GM12878 (cell line): ENCODE measurements at regions of chr6 and their contacts with region 1.

Region 1: DNA sequence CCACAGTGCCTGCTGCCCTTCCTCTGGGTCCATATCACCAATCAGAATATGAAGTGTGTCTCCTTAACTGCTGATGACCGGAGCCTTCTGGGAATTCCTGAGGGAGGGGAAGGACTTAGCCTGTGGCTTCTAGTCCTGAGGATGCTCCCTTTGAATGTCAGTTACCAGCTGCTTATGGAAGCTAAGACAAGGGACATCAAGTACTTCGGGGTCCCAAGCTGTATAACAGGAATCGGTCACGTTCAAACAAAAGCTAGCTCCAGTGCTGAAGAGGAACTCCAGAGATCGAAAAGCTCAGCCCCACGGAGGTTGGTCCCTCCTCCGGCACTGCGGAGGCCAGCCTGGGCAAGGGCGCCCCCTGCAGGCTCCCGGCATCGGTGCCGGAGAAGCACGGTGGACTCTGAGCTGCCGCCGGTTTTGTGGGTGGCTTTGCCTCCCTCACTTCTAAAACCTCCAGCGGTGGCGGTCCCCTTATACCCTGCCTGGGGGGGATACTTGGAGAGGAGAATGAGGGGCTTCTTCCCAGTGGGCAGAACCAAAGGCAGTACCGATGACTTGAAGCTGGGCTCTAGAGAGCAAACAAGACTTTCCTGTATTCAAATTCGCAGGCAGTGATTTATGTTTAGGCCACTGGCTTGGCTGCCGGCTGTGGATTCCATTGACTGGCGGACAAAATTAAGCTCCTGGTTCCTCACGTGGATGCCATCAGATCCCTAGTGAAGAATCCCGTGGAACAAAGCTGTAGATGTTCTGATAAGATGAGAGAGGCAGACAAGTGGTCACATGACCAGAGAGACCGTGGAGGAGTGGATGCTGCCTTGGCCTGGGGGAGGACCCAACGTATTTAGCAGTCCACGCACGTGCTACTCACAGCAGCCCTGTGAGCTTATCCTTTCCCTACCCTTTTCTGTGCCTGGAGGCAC is 16.2 kb upstream of the UBR2 start:
- DNase-seq: no peak
- ATAC-seq: peak; percentile 100
- H3K4me3 ChIP-seq: peak overlapping the region; percentile 59
- H3K27ac ChIP-seq: no peak overlapping the region
- H3K4me1 ChIP-seq: peaks cover 10% of the 10 kb centered on the region
- H3K27me3 ChIP-seq: no peaks in the 10 kb centered on the region
- CTCF ChIP-seq: peak; percentile 99; a peak in 5 of 6 replicates
- EP300 ChIP-seq: no peak
- POLR2A ChIP-seq: no peak; the same call in 1 of the 2 replicates
- RAD21 ChIP-seq: peak; percentile 99

Region 2: DNA sequence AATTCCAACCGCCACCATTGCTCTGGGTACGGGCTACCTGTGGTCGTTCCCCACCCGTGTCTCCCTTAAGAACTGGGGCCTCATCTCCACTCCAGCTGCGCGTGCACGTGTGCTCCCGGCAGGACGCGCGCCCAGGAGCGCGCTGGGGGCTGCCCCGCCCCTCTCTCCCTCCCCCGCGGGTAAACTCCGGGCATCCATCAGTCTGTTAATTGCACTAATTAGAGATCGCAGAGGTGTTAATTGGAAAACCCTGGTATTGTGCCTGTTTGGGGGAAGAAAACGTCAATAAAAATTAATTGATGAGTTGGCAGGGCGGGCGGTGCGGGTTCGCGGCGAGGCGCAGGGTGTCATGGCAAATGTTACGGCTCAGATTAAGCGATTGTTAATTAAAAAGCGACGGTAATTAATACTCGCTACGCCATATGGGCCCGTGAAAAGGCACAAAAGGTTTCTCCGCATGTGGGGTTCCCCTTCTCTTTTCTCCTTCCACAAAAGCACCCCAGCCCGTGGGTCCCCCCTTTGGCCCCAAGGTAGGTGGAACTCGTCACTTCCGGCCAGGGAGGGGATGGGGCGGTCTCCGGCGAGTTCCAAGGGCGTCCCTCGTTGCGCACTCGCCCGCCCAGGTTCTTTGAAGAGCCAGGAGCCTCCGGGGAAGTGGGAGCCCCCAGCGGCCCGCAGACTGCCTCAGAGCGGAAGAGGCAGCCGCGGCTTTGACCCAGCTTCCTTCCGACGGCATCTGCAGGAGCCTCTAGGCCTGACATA is 987.1 kb before region 1 on chr6:
- CTCF ChIA-PET with region 1: no interaction called
- POLR2A ChIA-PET with region 1: no interaction called
- RAD21 ChIA-PET with region 1: no interaction called
- SMC1A ChIA-PET with region 1: no interaction called
- in situ Hi-C with region 1: no loop called
- intact Hi-C with region 1: no loop called
- DNase-seq: no peak
- ATAC-seq: peak; percentile 92
- H3K4me3 ChIP-seq: peak overlapping the region; percentile 53
- H3K27ac ChIP-seq: peak overlapping the region; percentile 42; the same call in 1 of the 2 replicates
- H3K4me1 ChIP-seq: peaks cover 5% of the 10 kb centered on the region; the same call in 1 of the 2 replicates
- H3K27me3 ChIP-seq: no peaks in the 10 kb centered on the region
- CTCF ChIP-seq: 0 out of 6 replicates have a peak, but pooled peaks of 1 of the 3 experiments have one; percentile 3
- EP300 ChIP-seq: no peak
- POLR2A ChIP-seq: peak; percentile 60
- RAD21 ChIP-seq: 0 out of 2 replicates have a peak, but pooled peaks have one; percentile 4

Region 3: DNA sequence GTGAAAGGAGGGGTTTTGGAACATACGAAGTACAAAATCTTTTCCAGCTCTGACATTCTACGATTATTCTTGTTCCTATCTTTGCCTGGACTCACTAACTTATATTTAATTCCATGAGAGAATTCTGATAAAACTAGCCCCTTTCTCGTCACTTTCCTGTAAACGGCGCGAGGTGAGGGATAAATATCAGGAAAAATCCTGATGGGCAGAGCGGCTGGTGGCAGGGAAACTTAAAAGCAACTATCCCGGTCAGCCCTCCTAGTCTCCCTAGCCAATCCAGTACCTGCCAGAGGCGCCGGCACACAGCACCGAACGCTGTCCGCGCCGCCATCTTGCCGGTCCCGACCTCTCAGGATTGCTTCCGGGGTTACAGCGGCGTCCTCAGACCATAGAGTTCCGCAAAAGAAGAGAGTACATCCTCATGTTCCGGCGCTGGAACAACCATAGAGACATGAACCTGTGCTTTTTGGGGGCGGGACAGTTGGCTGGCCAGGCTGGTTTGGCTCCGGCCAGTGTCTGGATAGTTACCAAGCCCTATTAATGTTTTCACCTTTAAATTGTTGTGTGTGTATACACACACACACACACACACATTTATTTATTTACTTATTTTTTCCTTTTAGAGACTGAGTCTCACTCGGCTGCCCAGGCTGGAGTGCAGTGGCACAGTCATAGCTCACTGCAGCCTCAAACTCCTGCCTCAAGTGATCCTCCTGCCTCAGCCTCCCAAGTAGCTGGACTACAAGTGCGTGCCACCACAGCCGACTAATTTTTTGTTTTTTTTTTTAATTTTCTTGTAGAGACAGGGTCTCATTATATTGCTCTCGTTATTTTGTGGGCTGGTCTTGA is 329.9 kb before region 1 on chr6 and contains the start of gene MRPS10:
- CTCF ChIA-PET with region 1: interaction called, 25 read pairs
- POLR2A ChIA-PET with region 1: interaction called, 3 read pairs
- RAD21 ChIA-PET with region 1: interaction called, 28 read pairs
- SMC1A ChIA-PET with region 1: interaction called, 11 read pairs
- in situ Hi-C with region 1: no loop called
- intact Hi-C with region 1: loop called (anchors 5 kb)
- DNase-seq: peak; percentile 74
- ATAC-seq: peak; percentile 98
- H3K4me3 ChIP-seq: peak within 1 kb of the TSS; percentile 85
- H3K27ac ChIP-seq: peak within 1 kb of the TSS; percentile 65
- H3K4me1 ChIP-seq: peaks cover 5% of the 10 kb centered on the region; the same call in 1 of the 2 replicates
- H3K27me3 ChIP-seq: no peaks in the 10 kb centered on the region
- CTCF ChIP-seq: no peak
- EP300 ChIP-seq: 0 out of 4 replicates have a peak, but pooled peaks of 1 of the 2 experiments have one; percentile 14
- POLR2A ChIP-seq: peak; percentile 97
- RAD21 ChIP-seq: no peak
- polyA plus RNA-seq, gene MRPS10: 70.4 to 83.3 TPM

Region 4: GRCh38 chr6:42300696-42301095 is 247.0 kb before region 1 on chr6:
- CTCF ChIA-PET with region 1: interaction called, 15 read pairs
- POLR2A ChIA-PET with region 1: interaction called, 3 read pairs
- RAD21 ChIA-PET with region 1: interaction called, 8 read pairs
- SMC1A ChIA-PET with region 1: interaction called, 14 read pairs
- in situ Hi-C with region 1: loop called (anchors 5 kb)
- intact Hi-C with region 1: no loop called
- DNase-seq: no peak
- ATAC-seq: no peak
- H3K4me3 ChIP-seq: no peak overlapping the region
- H3K27ac ChIP-seq: no peak overlapping the region
- H3K4me1 ChIP-seq: no peaks in the 10 kb centered on the region
- H3K27me3 ChIP-seq: no peaks in the 10 kb centered on the region
- CTCF ChIP-seq: no peak
- EP300 ChIP-seq: no peak
- POLR2A ChIP-seq: no peak
- RAD21 ChIP-seq: no peak

Region 5: DNA sequence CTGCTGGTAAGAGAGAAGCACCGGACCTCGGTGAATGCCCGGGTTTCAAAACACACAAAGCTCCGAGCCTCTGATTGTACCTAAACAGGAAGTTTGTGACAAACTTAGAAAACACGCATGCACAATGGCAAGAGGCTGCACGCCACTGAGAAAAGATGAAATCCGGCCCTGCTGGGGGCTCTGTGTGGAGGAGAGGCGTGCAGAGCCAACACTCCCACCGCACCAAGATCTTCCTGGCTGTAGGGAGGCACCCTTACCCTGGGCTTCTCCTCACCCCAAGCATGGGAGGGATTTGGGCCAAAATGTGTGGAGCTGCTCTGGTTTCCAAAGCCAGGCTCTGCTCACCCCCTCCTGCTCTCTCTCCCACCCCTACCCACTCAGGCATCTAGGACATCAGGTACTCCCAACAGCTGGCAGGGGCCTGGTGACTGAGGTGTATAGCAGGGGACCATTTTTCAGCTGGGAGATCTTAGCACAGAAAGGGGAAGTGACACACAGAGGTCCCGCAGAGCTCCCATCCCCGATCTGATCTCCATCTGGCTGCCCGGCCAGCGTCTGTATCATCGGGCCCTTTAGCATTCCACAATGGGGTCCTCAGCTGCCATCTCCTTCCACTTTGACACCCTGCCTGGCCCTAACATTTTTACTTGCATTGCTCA is 180.2 kb before region 1 on chr6:
- CTCF ChIA-PET with region 1: interaction called, 20 read pairs
- POLR2A ChIA-PET with region 1: interaction called, 3 read pairs
- RAD21 ChIA-PET with region 1: interaction called, 6 read pairs
- SMC1A ChIA-PET with region 1: interaction called, 13 read pairs
- in situ Hi-C with region 1: no loop called
- intact Hi-C with region 1: no loop called
- DNase-seq: peak; percentile 59
- ATAC-seq: peak; percentile 92
- H3K4me3 ChIP-seq: peak overlapping the region; percentile 35; the same call in 1 of the 2 replicates
- H3K27ac ChIP-seq: peak overlapping the region; percentile 82
- H3K4me1 ChIP-seq: peaks cover 58% of the 10 kb centered on the region
- H3K27me3 ChIP-seq: no peaks in the 10 kb centered on the region
- CTCF ChIP-seq: no peak
- EP300 ChIP-seq: no peak
- POLR2A ChIP-seq: peak; percentile 52
- RAD21 ChIP-seq: no peak

Region 6: GRCh38 chr6:42428326-42429041 is 119.2 kb before region 1 on chr6:
- CTCF ChIA-PET with region 1: interaction called, 15 read pairs
- POLR2A ChIA-PET with region 1: no interaction called
- RAD21 ChIA-PET with region 1: interaction called, 8 read pairs
- SMC1A ChIA-PET with region 1: interaction called, 11 read pairs
- in situ Hi-C with region 1: no loop called
- intact Hi-C with region 1: no loop called
- DNase-seq: no peak
- ATAC-seq: peak; percentile 88
- H3K4me3 ChIP-seq: no peak overlapping the region
- H3K27ac ChIP-seq: peak overlapping the region; percentile 71
- H3K4me1 ChIP-seq: peaks cover 55% of the 10 kb centered on the region
- H3K27me3 ChIP-seq: no peaks in the 10 kb centered on the region
- CTCF ChIP-seq: no peak
- EP300 ChIP-seq: no peak
- POLR2A ChIP-seq: no peak
- RAD21 ChIP-seq: no peak; the same call in 1 of the 2 replicates

Region 7: DNA sequence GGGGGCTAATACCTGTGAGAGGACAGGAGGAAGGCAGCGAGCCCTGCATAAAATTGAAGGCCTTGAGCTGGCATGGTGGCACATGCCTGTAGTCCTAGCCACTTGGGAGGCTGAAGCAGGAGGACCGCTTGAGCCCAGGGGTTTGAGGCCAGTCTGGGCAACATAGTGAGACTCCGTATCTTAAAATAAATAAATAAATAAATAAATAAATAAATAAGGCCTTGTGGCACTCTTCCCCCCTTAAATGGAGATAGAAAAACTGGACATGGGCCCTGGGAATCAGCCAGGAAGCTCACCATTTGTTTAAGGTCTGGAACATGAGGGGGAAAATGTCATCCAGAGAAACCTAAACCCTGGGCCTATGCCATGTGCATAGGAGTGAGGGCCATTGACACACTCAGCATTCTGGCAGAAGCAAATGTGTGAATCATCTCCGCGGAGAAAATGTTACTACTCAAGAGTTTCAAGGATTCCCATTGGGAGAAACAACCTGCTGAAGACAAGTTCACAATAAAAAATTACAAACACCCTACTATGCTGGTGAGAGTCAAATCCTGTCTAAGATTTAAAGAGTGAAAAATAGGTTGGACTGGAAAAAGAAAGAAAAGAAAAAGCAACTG is 35.8 kb before region 1 on chr6:
- CTCF ChIA-PET with region 1: interaction called, 78 read pairs
- POLR2A ChIA-PET with region 1: no interaction called
- RAD21 ChIA-PET with region 1: interaction called, 47 read pairs
- SMC1A ChIA-PET with region 1: interaction called, 60 read pairs
- in situ Hi-C with region 1: no loop called
- intact Hi-C with region 1: loop called (anchors 5 kb)
- DNase-seq: no peak
- ATAC-seq: no peak
- H3K4me3 ChIP-seq: no peak overlapping the region
- H3K27ac ChIP-seq: no peak overlapping the region
- H3K4me1 ChIP-seq: peaks cover 25% of the 10 kb centered on the region
- H3K27me3 ChIP-seq: no peaks in the 10 kb centered on the region
- CTCF ChIP-seq: no peak
- EP300 ChIP-seq: no peak
- POLR2A ChIP-seq: no peak
- RAD21 ChIP-seq: no peak

Region 8: DNA sequence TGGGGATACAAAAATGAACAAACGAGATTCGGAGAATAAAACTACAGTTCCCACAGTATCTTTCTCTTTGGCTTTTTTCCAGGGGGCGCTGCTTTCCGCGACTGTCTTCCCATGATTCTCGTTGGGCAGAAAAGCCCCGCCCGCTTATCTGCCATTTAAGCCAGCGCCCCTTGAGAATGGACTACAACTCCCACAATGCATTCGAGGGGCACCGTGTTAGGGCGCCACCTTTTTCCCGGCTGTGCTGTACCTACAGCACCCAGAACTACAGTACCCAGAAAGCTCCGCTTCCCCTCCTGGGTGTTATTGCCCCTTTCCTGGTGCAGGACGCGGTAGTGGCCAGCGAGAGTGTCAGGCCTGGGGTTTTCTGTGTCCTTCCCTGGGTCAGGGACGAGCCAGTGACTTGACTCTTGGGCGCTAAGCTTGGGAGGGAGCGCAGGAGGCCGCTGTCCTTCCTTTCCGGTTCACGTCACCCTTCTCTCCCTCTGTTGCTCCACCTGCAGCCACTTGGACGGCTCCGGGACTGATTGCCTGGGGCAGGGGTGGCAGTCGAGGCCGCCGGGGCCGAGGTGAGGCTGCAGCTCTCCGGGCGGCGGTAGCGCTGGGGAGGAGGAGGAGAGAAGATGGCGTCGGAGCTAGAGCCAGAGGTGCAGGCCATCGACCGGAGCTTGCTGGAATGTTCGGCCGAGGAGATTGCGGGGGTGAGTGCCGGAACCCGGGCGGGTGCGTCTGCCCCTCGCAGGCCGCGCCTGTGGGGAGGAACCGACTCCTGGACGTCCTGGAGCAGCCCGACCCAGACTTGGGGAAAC is 16.2 kb after region 1 on chr6 and contains the start of gene UBR2:
- CTCF ChIA-PET with region 1: interaction called, 51 read pairs
- POLR2A ChIA-PET with region 1: interaction called, 4 read pairs
- RAD21 ChIA-PET with region 1: interaction called, 8 read pairs
- SMC1A ChIA-PET with region 1: interaction called, 9 read pairs
- in situ Hi-C with region 1: no loop called
- intact Hi-C with region 1: no loop called
- DNase-seq: peak; percentile 91
- ATAC-seq: peak; percentile 96
- H3K4me3 ChIP-seq: peak within 1 kb of the TSS; percentile 90
- H3K27ac ChIP-seq: peak within 1 kb of the TSS; percentile 93
- H3K4me1 ChIP-seq: no peaks in the 10 kb centered on the region; the same call in 1 of the 2 replicates
- H3K27me3 ChIP-seq: no peaks in the 10 kb centered on the region
- CTCF ChIP-seq: peak; percentile 32 to 40 (median 39); a peak in 5 of 6 replicates
- EP300 ChIP-seq: no peak
- POLR2A ChIP-seq: peak; percentile 97
- RAD21 ChIP-seq: no peak
- polyA plus RNA-seq, gene UBR2: 2.3 to 5.9 TPM

Region 9: GRCh38 chr6:42616716-42617115 is 69.0 kb after region 1 on chr6:
- CTCF ChIA-PET with region 1: no interaction called
- POLR2A ChIA-PET with region 1: no interaction called
- RAD21 ChIA-PET with region 1: no interaction called
- SMC1A ChIA-PET with region 1: no interaction called
- in situ Hi-C with region 1: no loop called
- intact Hi-C with region 1: no loop called
- DNase-seq: no peak
- ATAC-seq: no peak
- H3K4me3 ChIP-seq: no peak overlapping the region
- H3K27ac ChIP-seq: no peak overlapping the region
- H3K4me1 ChIP-seq: no peaks in the 10 kb centered on the region
- H3K27me3 ChIP-seq: no peaks in the 10 kb centered on the region
- CTCF ChIP-seq: no peak
- EP300 ChIP-seq: no peak
- POLR2A ChIP-seq: no peak
- RAD21 ChIP-seq: no peak

Region 10: GRCh38 chr6:43103253-43103881 is 555.7 kb after region 1 on chr6:
- CTCF ChIA-PET with region 1: no interaction called
- POLR2A ChIA-PET with region 1: no interaction called
- RAD21 ChIA-PET with region 1: no interaction called
- SMC1A ChIA-PET with region 1: no interaction called
- in situ Hi-C with region 1: no loop called
- intact Hi-C with region 1: no loop called
- DNase-seq: no peak
- ATAC-seq: no peak
- H3K4me3 ChIP-seq: no peak overlapping the region
- H3K27ac ChIP-seq: no peak overlapping the region
- H3K4me1 ChIP-seq: no peaks in the 10 kb centered on the region
- H3K27me3 ChIP-seq: no peaks in the 10 kb centered on the region
- CTCF ChIP-seq: no peak
- EP300 ChIP-seq: no peak
- POLR2A ChIP-seq: no peak
- RAD21 ChIP-seq: no peak